ENCODE measurements at regions of chr4 and their contacts with region 1.

Region 1: GRCh38 chr4:128718768-128719167 is 90.7 kb upstream of the JADE1 start:
- DNase-seq: no peak
- H3K4me3 ChIP-seq: no peak overlapping the region
- H3K27ac ChIP-seq: no peak overlapping the region
- H3K4me1 ChIP-seq: peaks cover 0 to 12% of the 10 kb centered on the region in 2 donors
- H3K27me3 ChIP-seq: no peaks in the 10 kb centered on the region
- CTCF ChIP-seq: no peak

Region 2: DNA sequence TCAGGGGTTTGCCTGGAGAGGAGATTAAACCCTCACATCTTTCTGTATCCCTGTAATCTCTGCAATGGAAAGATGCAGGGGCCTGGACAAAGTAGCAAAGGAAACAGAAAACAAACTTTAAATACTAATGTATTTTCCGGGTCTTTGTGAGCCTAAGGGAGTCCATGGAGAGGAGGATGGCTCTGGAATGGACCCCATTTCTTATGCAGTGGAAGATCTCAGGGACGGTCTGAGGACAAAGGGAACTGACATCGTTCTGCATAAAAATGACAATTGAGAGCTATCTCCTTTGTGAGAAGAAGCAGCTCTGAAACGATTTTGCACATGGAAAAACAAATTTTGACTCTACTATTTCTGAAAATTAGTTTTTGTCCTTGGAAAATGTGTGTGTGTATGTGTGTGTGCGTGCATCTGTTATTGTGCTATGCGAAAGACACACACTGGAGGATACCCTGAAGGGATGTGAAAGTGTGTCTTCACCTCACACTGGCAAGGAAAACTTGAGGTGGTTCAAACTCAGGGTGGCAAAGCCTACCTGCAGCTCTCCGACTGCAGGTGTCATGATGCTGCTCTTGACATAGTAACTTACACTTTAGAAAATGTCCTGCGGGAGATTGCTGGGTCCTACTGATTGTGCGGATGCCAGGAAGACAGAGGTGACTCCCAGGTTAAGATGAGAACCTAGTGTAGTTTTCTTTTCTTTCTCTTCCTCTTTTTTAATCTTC is 35.7 kb before region 1 on chr4:
- intact Hi-C with region 1: loop called (anchors 5 kb)
- DNase-seq: no peak
- H3K4me3 ChIP-seq: no peak overlapping the region
- H3K27ac ChIP-seq: no peak overlapping the region
- H3K4me1 ChIP-seq: no peaks in the 10 kb centered on the region
- H3K27me3 ChIP-seq: no peaks in the 10 kb centered on the region
- CTCF ChIP-seq: no peak